AG04450 (cell line): ENCODE measurements at regions of chr7 and their contacts with region 1.

Region 1: DNA sequence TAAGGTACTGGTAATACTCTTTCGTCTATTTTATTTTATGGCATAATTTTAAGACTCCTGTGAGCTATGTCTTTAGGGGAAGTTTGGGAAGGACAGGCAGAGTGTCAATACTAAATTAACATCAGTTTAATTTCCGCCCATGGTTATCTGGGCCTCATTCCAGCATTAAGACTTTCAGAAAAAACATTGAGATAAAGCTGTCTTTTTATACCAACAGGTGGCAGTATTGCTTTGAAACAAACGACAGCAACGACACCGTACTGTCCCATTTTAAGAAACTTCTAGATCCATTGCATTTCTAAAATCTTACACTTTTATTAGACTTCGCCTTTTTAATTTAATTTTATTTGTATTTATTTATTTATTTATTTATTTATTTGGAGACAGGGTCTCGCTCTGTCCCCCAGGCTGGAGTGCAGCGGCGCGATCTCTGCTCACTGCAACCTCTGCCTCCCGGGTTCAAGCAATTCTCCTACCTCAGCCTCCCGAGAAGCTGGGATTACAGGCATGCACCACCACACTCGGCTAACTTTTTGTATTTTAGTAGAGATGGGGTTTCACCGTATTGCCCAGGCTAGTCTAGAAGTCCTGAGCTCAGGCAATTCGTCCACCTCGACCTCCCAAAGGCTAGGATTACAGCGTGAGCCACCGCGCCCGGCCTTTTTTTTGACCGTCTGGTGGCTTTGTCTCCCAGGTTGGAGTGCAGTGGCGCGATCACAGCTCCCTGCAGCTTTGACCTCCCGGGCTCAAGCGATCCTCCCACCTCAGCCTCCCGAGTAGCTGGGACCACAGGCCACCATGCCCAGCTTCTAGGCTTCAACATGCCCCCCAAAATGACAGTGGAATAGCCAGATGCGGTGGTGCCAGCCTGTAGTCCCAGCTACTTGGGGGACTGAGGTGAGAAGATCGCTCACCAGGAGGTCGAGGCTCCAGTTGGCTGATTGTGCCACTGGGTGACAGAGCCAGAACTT is 78.7 kb upstream of the C1GALT1 start:
- DNase-seq: peak; percentile 20
- H3K4me3 ChIP-seq: no peak overlapping the region
- H3K27ac ChIP-seq: no peak overlapping the region
- H3K27me3 ChIP-seq: no peaks in the 10 kb centered on the region
- CTCF ChIP-seq: peak; percentile 66

Region 2: DNA sequence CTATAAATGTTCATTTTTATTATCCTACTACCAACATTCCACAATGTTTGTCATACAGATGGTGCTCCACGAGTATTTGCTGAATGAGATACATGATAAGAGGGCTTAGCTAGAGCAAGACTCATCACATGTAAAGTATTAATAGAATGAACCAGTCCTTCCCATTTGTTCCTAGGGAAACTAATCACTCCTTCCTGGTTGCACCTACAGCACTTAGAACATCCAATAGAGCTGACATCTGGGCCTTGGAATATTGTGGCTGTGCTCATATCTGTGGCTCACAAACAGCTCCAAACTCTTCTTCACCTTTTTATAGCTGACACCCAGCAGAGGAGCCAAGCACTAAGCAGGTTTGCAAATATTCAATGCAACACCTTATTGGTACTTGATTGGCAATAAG is 13.2 kb before region 1 on chr7:
- CTCF ChIA-PET with region 1: interaction called, 35 read pairs
- POLR2A ChIA-PET with region 1: no interaction called
- DNase-seq: no peak
- H3K4me3 ChIP-seq: no peak overlapping the region
- H3K27ac ChIP-seq: no peak overlapping the region
- H3K27me3 ChIP-seq: no peaks in the 10 kb centered on the region
- CTCF ChIP-seq: no peak

Region 3: DNA sequence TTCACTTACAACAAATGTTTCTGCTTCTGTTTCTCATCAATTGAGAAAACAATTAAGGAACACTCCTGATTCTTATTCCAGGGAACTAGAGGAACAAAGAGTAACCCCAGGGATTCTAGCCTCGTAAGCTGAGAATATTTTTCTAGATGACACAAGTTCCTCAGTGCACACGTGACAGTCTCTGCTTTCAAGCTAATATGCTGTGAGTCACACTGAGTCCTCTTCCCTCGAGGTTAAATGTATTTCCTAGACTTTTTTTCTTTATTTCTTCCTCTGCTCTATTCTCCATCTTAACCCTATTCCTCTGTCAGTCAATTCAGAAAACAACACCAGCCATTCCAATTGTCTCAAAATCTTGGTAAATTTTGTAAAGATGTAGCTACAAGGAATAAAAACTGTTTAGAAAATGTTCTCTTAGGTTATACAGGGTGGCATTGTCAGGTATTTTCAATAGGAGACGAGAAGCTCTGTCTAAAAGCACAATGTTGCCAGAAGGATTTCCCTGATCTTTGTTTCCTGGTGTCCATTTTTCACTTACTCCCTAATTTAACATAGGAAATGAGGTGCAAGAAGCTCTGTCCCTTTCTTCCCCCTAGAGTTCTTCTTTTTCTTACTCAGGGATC is 72.9 kb after region 1 on chr7:
- CTCF ChIA-PET with region 1: interaction called, 15 read pairs
- POLR2A ChIA-PET with region 1: interaction called, 3 read pairs
- DNase-seq: no peak
- H3K4me3 ChIP-seq: no peak overlapping the region
- H3K27ac ChIP-seq: peak overlapping the region; percentile 60
- H3K27me3 ChIP-seq: no peaks in the 10 kb centered on the region
- CTCF ChIP-seq: no peak

Region 4: DNA sequence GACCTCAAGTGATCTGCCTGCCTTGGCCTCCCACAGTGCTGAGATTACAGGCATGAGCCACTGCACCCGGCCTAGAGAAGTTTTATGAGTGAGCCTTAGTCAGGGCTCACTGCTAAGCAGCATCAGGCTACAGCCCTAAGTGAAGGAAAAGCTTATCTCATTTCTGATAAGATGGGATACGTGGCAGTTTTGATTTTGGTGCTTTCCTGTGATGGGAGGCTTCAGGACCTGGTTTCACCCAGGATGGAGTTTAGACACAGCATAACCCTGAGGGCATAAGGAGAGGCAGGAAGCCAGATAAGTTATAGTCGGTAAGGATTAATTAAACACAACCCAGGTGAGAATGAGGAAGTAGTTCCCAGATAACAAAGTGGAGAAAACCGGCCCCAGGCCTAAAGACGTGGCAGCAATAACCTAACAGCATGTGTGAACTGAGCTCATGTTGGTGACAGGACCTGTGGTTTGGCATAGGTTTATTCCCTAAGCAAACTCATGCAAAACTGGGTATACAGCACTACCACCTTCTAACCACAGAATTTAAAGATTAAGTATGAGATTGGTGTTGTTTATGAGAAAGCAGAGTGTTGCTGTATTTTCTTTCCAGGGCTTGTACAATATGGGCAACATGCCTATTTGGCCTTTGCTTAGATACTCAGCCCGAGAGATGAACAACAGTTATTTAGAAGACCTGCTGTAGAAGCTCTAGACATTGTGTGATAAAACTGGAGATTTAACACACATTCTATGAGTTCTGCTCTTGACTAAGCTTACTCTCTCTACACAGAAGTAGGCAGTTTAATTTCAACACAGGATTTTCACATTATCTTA is 312.6 kb after region 1 on chr7:
- CTCF ChIA-PET with region 1: interaction called, 45 read pairs
- POLR2A ChIA-PET with region 1: no interaction called
- DNase-seq: no peak
- H3K4me3 ChIP-seq: no peak overlapping the region
- H3K27ac ChIP-seq: no peak overlapping the region
- H3K27me3 ChIP-seq: no peaks in the 10 kb centered on the region
- CTCF ChIP-seq: no peak

Region 5: DNA sequence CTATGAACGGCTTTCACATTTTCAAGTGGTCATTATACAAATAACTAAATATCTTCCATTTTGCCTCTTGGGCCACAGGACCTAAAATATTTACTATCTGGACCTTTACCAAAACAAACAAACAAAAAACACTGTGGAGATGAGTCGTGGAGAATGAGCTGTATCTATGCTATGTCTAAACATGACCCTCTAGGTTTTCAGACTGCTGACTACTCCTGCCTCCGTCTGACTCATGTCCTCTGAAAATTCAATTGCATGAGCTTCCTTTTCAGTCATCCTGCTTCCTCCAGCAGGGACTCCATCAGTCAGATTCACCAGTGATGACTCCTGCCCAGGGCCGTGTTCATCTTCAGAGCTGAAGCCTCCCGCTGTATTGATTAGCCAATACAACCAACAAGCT is 335.2 kb after region 1 on chr7:
- CTCF ChIA-PET with region 1: interaction called, 13 read pairs
- POLR2A ChIA-PET with region 1: no interaction called
- DNase-seq: peak; percentile 95
- H3K4me3 ChIP-seq: no peak overlapping the region
- H3K27ac ChIP-seq: peak overlapping the region; percentile 86
- H3K27me3 ChIP-seq: no peaks in the 10 kb centered on the region
- CTCF ChIP-seq: 0 out of 2 replicates have a peak, but pooled peaks have one; percentile 24

Region 6: GRCh38 chr7:7542251-7542835 is 438.7 kb after region 1 on chr7:
- CTCF ChIA-PET with region 1: interaction called, 26 read pairs
- POLR2A ChIA-PET with region 1: no interaction called
- DNase-seq: no peak
- H3K4me3 ChIP-seq: no peak overlapping the region
- H3K27ac ChIP-seq: no peak overlapping the region
- H3K27me3 ChIP-seq: no peaks in the 10 kb centered on the region
- CTCF ChIP-seq: no peak